ENCODE measurements at regions of chr1 and their contacts with region 1.

Region 1: GRCh38 chr1:32394141-32394889 is at the start of gene BSDC1:
- DNase-seq: peak; percentile 99
- H3K4me3 Mint-ChIP-seq: peak within 1 kb of the TSS; percentile 91
- H3K27ac Mint-ChIP-seq: peak within 1 kb of the TSS; percentile 97
- H3K4me1 Mint-ChIP-seq: peaks cover 6% of the 10 kb centered on the region
- H3K27me3 Mint-ChIP-seq: no peaks in the 10 kb centered on the region
- CTCF ChIP-seq: no peak
- total RNA-seq, gene BSDC1: 52.6 and 56.2 TPM in 2 replicates

Region 2: DNA sequence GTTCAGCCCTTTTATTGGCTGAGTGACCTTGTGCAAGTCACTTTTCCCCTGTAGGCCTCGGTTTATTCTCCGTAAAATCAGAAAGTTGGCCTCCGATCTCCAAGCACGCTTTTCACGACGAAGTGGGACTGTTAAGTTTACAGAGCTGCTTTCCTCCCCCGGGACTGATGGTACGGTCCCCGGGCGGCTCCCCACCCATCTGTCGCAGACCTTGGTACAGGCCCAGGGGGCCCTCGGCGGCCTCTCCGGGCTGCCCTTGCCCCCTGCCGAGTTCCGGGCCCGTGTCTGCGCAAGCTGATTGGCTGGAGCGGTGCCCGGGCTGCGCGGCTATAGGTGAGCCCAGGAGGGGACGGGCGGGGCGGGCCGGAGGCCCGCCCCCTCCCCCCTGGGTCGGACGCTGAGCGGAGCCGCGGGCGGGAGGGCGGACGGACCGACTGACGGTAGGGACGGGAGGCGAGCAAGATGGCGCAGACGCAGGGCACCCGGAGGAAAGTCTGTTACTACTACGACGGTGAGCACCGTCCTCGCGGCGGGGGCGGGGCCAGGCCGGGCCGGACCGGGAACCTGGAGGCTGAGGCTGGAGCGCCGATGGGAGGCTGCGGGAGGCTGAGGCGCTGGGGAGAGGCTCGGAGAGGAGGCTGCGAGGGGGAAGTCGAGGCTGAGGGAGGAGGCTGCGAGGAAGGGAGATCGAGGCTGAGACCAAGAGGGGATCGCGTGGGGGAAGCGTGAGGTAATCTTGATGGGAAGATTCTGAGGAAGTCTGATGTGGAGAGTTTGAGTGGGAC is 102.4 kb before region 1 on chr1 and contains the start of gene HDAC1:
- CTCF ChIA-PET with region 1: no interaction called
- POLR2A ChIA-PET with region 1: interaction called, 10 read pairs
- intact Hi-C with region 1: no loop called
- DNase-seq: peak; percentile 96
- H3K4me3 Mint-ChIP-seq: peak within 1 kb of the TSS; percentile 99
- H3K27ac Mint-ChIP-seq: peak within 1 kb of the TSS; percentile 96
- H3K4me1 Mint-ChIP-seq: peaks cover 22% of the 10 kb centered on the region
- H3K27me3 Mint-ChIP-seq: no peaks in the 10 kb centered on the region
- CTCF ChIP-seq: no peak
- total RNA-seq, gene HDAC1: 39.7 and 62.9 TPM in 2 replicates

Region 3: DNA sequence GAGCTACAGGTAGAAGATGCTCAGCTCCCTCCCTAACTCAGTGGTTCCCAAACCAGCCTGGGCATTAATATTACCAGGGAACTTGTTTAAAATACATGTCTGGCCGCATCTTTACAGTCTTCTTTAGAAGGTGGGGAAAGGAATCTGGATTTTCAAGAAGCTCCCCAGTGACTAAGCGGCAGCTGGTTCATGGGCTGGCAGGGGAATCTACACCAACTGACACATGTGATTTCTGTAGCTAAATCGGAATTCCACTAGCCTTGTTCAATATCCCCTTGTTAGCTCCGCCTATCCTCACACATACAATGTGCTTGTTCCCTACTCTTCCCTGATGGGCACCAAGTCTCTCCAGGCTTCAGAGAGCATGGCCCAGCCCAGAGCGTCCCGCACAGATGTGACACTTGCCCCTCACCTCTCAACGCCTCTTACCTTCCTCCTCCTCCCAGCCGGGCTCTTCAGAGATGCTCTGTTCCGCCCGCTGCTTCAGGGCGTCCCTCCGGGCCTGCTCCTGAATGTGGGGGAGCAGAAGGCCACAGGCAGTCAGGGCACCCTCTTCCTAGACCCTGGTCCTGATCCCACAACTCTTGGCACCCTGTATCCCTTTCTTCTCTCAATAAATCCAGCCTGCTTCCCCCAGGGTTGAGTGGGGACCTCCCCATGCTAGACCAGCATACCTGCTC is 16.6 kb before region 1 on chr1:
- CTCF ChIA-PET with region 1: interaction called, 3 read pairs
- POLR2A ChIA-PET with region 1: interaction called, 10 read pairs
- intact Hi-C with region 1: no loop called
- DNase-seq: no peak
- H3K4me3 Mint-ChIP-seq: no peak overlapping the region
- H3K27ac Mint-ChIP-seq: no peak overlapping the region
- H3K4me1 Mint-ChIP-seq: no peaks in the 10 kb centered on the region
- H3K27me3 Mint-ChIP-seq: no peaks in the 10 kb centered on the region
- CTCF ChIP-seq: no peak

Region 4: DNA sequence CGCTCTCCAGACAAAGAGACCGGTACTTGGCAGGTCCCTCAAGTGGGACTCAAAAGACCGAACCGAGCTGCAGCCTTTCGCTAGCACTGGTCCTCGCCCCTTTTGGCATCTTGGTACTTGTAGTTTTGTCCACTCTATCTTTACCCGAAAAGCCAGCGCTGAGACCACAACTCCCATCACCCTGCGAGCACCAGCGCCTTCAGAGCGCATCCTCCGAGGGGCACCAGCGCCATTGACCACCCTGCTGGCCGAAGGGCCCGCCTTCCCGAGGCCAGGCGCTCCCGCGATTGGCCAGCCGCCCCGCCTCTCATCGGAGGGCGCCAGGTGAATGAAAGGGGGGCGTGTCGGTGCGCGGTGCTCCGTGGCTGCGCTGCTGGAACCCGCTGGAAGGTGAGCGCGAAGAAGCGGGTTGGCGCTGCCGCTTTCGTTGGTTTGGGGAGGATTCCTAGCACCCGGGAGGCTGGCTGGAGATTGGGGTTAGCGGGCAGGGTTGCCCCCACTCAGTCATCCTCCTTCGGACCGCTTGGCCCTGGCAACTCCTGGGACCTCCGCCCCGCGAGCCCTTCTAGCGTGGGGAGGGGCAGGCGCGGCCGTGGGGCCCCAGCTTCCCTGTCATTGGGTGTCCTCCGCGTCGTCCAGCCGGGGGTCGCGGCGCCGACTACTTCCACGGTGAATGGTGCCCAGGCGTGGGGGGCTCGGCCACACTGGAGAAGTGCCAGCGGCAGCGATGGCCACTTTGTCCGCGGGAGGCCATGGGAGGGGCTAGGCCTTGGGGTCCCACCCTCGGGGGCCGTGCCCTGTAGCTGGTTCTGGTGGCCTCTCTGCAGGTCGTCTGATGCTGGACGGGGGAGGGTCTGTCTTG is 70.6 kb after region 1 on chr1 and contains the start of gene ZBTB8B:
- CTCF ChIA-PET with region 1: no interaction called
- POLR2A ChIA-PET with region 1: no interaction called
- intact Hi-C with region 1: no loop called
- DNase-seq: no peak
- H3K4me3 Mint-ChIP-seq: peak within 1 kb of the TSS; percentile 64
- H3K27ac Mint-ChIP-seq: no peak within 1 kb of the TSS
- H3K4me1 Mint-ChIP-seq: no peaks in the 10 kb centered on the region
- H3K27me3 Mint-ChIP-seq: peaks cover 49% of the 10 kb centered on the region
- CTCF ChIP-seq: no peak
- total RNA-seq, gene ZBTB8B: not detected in 2 replicates